ENCODE measurements at regions of chr4 and their contacts with region 1.

Region 1: GRCh38 chr4:15956179-15956850 is 6.7 kb downstream of the FGFBP2 start:
- DNase-seq: peak; percentile 73
- H3K4me3 ChIP-seq: no peak overlapping the region
- H3K27ac ChIP-seq: no peak overlapping the region
- H3K4me1 ChIP-seq: peaks cover 0 to 3% of the 10 kb centered on the region in 2 experiments; a peak in 1 of 4 replicates
- H3K27me3 ChIP-seq: no peaks in the 10 kb centered on the region
- CTCF ChIP-seq: peak; percentile 98
- EP300 ChIP-seq: no peak
- RAD21 ChIP-seq: peak; percentile 92

Region 2: DNA sequence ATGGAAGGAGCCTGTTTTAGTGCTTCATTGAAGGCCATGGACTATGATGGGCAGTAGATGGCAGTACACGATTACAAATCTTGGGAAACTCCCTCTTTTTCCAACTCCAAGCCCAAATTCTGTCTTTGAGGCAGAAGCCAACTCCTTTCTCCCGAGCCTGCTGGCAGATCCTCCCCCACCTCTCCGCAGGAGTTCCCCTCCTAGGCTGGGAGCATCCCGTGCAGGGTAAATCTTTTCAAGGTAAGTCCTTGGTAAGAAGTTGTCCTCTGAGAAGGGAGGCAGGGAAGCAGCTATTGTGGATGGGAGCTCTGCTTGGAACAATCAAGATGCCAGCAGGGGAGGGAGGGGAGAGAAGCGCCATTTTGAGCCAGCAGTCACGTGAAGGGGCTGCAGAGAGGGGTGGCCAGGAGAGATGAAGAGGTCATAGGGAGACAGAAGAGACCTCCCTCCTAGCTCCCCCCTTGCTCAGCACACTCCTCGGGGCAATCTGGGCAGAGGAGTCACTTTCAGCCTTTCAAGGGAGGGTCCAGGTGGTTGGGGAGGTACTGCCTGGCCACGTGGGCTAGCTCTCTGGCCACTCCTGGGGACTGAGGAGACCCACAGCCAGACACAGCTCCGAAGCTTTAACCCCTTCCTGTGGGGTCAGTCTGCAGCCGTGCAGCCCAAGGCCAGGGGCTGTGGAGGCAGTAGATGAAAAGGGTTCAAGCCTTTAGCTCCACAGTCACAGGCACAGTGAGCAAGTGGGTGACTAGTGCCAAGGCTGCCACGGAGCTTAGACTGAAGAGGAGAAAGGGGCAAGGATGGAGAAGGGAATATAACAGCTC is 477.0 kb before region 1 on chr4:
- CTCF ChIA-PET with region 1: interaction called, 23 read pairs
- POLR2A ChIA-PET with region 1: interaction called, 3 read pairs
- DNase-seq: peak; percentile 74
- H3K4me3 ChIP-seq: peak overlapping the region; percentile 49 to 55
- H3K27ac ChIP-seq: peak overlapping the region; percentile 58 to 93
- H3K4me1 ChIP-seq: peaks cover 10% of the 10 kb centered on the region in 2 experiments; a peak in 3 of 4 replicates
- H3K27me3 ChIP-seq: no peaks in the 10 kb centered on the region
- CTCF ChIP-seq: peak; percentile 79
- EP300 ChIP-seq: no peak
- RAD21 ChIP-seq: peak; percentile 94

Region 3: GRCh38 chr4:15868111-15868510 is 88.2 kb before region 1 on chr4:
- CTCF ChIA-PET with region 1: interaction called, 10 read pairs
- POLR2A ChIA-PET with region 1: no interaction called
- DNase-seq: no peak
- H3K4me3 ChIP-seq: no peak overlapping the region
- H3K27ac ChIP-seq: no peak overlapping the region
- H3K4me1 ChIP-seq: no peaks in the 10 kb centered on the region
- H3K27me3 ChIP-seq: no peaks in the 10 kb centered on the region
- CTCF ChIP-seq: no peak
- EP300 ChIP-seq: no peak
- RAD21 ChIP-seq: no peak

Region 4: DNA sequence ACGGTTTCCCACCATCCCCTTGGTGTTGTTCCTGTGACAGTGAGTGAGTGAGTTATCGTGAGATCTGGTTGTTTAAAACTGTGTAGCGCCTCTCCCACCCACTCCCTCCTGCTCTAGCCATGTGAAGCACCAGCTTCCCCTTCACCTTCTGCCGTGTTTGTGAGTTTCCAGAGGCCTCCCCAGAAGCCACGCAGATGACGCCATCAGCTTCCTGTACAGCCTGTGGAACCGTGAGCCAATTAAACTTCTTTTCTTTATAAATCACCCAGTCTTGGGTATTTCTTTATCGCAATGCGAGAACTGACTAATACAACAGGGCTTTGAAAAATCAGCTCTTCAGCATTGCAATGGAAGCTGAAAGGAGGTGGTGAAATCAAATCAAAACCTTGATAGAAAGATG is 67.8 kb before region 1 on chr4:
- CTCF ChIA-PET with region 1: interaction called, 154 read pairs
- POLR2A ChIA-PET with region 1: no interaction called
- DNase-seq: no peak
- H3K4me3 ChIP-seq: no peak overlapping the region
- H3K27ac ChIP-seq: no peak overlapping the region
- H3K4me1 ChIP-seq: peaks cover 0 to 3% of the 10 kb centered on the region in 2 experiments; a peak in 1 of 4 replicates
- H3K27me3 ChIP-seq: no peaks in the 10 kb centered on the region
- CTCF ChIP-seq: no peak
- EP300 ChIP-seq: no peak
- RAD21 ChIP-seq: no peak

Region 5: GRCh38 chr4:15938182-15938581 is 18.1 kb before region 1 on chr4:
- CTCF ChIA-PET with region 1: interaction called, 22 read pairs
- POLR2A ChIA-PET with region 1: no interaction called
- DNase-seq: no peak
- H3K4me3 ChIP-seq: no peak overlapping the region
- H3K27ac ChIP-seq: no peak overlapping the region
- H3K4me1 ChIP-seq: no peaks in the 10 kb centered on the region
- H3K27me3 ChIP-seq: no peaks in the 10 kb centered on the region; the same call in 1 of the 2 replicates
- CTCF ChIP-seq: no peak
- EP300 ChIP-seq: no peak
- RAD21 ChIP-seq: no peak

Region 6: GRCh38 chr4:16001484-16001858 is 45.2 kb after region 1 on chr4:
- CTCF ChIA-PET with region 1: interaction called, 60 read pairs
- POLR2A ChIA-PET with region 1: no interaction called
- DNase-seq: peak; percentile 76
- H3K4me3 ChIP-seq: no peak overlapping the region; a peak in 1 of 4 replicates
- H3K27ac ChIP-seq: no peak overlapping the region
- H3K4me1 ChIP-seq: peaks cover 0 to 12% of the 10 kb centered on the region in 2 experiments; a peak in 1 of 4 replicates
- H3K27me3 ChIP-seq: 0 out of 2 replicates have a peak, but pooled peaks cover 6% of the 10 kb centered on the region
- CTCF ChIP-seq: peak; percentile 88
- EP300 ChIP-seq: no peak; a peak in 1 of 4 replicates
- RAD21 ChIP-seq: peak; percentile 94

Measured in SK-N-SH (cell line).